Transverse colon (tissue), 4 donors: ENCODE measurements at regions of chr4 and their contacts with region 1.

Region 1: GRCh38 chr4:74228691-74229640 is 71.0 kb downstream of the MTHFD2L start:
- DNase-seq: peak; percentile 80
- H3K4me3 ChIP-seq: no peak overlapping the region
- H3K27ac ChIP-seq: no peak overlapping the region
- H3K4me1 ChIP-seq: peaks cover 0 to 15% (median 4%) of the 10 kb centered on the region in 4 donors
- H3K27me3 ChIP-seq: no peaks in the 10 kb centered on the region
- CTCF ChIP-seq: peak; percentile 69 to 88 (median 75)
- EP300 ChIP-seq: no peak
- POLR2A ChIP-seq: no peak

Region 2: GRCh38 chr4:74311696-74312313 is 82.8 kb after region 1 on chr4:
- in situ Hi-C with region 1: loop called in 1 of 4 experiments (anchors 10 kb)
- intact Hi-C with region 1: no loop called
- DNase-seq: no peak
- H3K4me3 ChIP-seq: no peak overlapping the region
- H3K27ac ChIP-seq: no peak overlapping the region
- H3K4me1 ChIP-seq: no peaks in the 10 kb centered on the region
- H3K27me3 ChIP-seq: no peaks in the 10 kb centered on the region
- CTCF ChIP-seq: peak; percentile 20 to 55 (median 45)
- EP300 ChIP-seq: no peak
- POLR2A ChIP-seq: no peak